ENCODE measurements at regions of chr7 and their contacts with region 1.

Region 1: GRCh38 chr7:2258661-2259365 is 16.8 kb downstream of the NUDT1 start:
- DNase-seq: no peak
- ATAC-seq: no peak
- H3K4me3 ChIP-seq: no peak overlapping the region
- H3K27ac ChIP-seq: no peak overlapping the region
- H3K4me1 ChIP-seq: no peaks in the 10 kb centered on the region
- H3K27me3 ChIP-seq: no peaks in the 10 kb centered on the region
- CTCF ChIP-seq: no peak

Region 2: GRCh38 chr7:2354186-2354938 is 95.5 kb after region 1 on chr7 and contains the start of gene EIF3B:
- intact Hi-C with region 1: loop called in 1 of 3 experiments (anchors 10 kb)
- DNase-seq: peak; percentile 86 to 93 (median 90)
- ATAC-seq: peak; percentile 90 to 95 (median 92)
- H3K4me3 ChIP-seq: peak within 1 kb of the TSS; percentile 89 to 100 (median 99)
- H3K27ac ChIP-seq: peak within 1 kb of the TSS; percentile 99 to 100 (median 100)
- H3K4me1 ChIP-seq: peaks cover 10 to 26% (median 23%) of the 10 kb centered on the region in 3 donors
- H3K27me3 ChIP-seq: no peaks in the 10 kb centered on the region
- CTCF ChIP-seq: no peak
- total RNA-seq, gene EIF3B: 61.1 to 106 (median 72.4) TPM

Region 3: DNA sequence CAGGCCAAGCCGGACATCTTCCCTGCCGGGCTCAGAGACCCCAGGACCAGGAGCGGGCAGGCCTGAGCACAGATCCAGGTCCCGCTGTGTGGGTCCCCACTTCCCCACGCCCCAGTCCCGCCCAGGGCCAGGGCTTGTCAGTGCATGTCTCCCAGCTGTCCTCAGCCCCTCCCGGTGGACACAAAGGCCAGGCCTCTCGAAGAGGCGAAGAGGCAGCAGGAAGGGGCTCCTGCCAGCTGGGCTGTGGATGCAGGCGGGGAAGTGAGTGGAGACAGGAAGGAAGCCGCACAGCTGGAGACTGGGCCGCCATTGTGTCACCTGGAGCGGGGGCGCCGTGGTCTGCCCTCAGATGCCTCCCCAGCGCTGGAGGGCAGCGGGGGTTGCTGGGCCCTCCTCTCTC is 212.6 kb after region 1 on chr7:
- intact Hi-C with region 1: no loop called
- DNase-seq: no peak
- ATAC-seq: no peak
- H3K4me3 ChIP-seq: no peak overlapping the region
- H3K27ac ChIP-seq: no peak overlapping the region
- H3K4me1 ChIP-seq: no peaks in the 10 kb centered on the region
- H3K27me3 ChIP-seq: no peaks in the 10 kb centered on the region
- CTCF ChIP-seq: no peak

Measured in pancreas (tissue), 10 donors.